GM23248 (cell line): ENCODE measurements at regions of chr1 and their contacts with region 1.

Region 1: DNA sequence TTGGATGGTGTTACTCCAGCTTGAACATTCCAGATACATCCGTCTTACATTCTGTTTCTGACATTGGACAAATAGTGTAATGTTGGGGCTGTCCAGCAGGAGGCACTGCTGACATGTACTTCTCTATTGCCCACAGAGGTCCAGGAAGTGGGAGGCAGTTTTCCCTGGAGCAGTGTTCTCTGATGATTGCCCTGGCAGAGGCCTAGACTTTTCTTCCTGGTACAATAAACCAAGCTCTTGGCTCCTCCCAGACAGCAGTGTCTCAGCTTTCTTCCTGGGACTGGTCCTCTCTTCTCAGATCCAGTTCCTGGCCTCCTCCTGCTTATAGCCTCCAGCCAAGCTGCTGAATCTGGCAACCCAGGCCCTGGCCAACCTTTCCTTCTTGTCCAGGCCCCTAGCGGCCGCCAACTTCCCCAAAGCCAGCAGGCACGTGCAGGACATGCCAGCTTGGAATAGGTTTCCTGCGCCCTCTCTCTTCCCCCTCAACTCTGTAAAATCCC is 14.9 kb upstream of the IFNLR1 start:
- DNase-seq: peak; percentile 92
- H3K4me3 ChIP-seq: no peak overlapping the region
- H3K27ac ChIP-seq: 0 out of 2 replicates have a peak overlapping the region, but pooled peaks have one; percentile 3
- H3K4me1 ChIP-seq: no peaks in the 10 kb centered on the region
- H3K27me3 ChIP-seq: no peaks in the 10 kb centered on the region

Region 2: DNA sequence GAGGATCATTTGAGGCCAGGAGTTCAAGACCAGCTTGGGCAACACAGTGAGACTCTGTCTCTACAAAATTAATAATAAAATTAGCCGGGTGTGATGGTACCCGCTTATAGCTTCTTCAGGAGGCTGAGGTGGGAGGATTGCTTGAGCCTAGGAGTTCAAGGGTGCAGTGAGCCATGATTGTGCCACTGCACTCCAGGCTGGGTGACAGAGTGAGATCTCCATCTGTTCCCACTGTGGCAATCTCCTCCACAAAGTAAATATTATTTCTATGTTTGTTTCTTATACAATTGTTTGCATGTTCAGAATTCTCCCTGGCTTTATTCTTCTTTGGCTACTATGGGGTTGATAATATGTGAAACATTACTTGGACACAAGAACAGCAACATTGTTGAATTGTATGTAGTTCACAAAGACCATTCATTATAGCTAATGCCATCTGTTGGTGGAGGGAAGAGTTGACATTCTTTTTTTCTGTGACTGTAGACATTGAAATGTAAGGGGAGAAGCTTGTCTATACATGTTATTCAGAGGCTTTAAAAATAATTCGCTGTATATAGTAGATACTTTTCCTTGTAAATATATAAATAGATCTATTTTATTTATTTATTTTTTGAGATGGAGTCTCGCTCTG is 174.0 kb before region 1 on chr1:
- in situ Hi-C with region 1: no loop called
- DNase-seq: peak; percentile 73
- H3K4me3 ChIP-seq: no peak overlapping the region
- H3K27ac ChIP-seq: no peak overlapping the region
- H3K4me1 ChIP-seq: peaks cover 6% of the 10 kb centered on the region
- H3K27me3 ChIP-seq: no peaks in the 10 kb centered on the region

Region 3: DNA sequence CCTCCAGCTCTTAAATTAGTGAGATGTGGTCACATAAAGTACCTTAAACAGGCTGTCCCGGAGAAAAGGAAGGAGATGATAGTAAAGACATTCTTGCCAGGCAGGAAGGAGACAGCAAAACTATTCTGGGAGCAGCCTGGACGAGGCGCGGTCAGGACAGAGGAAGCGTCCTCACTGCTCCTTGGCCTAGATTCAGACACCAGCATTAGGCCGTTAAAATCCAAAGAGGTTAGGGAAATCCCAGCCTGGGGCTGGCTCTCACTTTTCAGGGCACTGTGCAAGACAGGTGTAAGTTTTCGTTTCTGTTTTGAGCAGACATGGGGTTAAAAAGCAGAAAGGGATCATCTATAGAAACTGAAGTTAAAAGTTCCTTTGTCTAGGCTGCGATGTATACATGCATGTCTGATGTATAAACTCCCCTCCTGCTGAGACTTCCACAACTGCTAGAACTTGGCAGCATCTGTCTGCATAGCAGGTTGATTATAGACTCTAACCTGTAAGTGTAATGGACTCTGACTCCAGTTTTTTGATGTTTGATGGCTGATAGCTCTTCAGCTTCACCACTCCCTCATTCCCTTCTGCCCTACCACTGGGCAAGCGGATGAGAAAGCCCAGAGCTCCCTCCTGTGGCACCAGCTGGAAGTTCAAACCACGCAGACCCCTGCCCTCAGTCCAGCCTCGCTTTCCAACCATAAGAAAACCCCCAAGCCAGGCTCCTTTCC is 190.1 kb after region 1 on chr1:
- in situ Hi-C with region 1: loop called (anchors 5 kb)
- DNase-seq: peak; percentile 74
- H3K4me3 ChIP-seq: peak overlapping the region; percentile 58
- H3K27ac ChIP-seq: peak overlapping the region; percentile 54
- H3K4me1 ChIP-seq: peaks cover 39% of the 10 kb centered on the region
- H3K27me3 ChIP-seq: no peaks in the 10 kb centered on the region

Region 4: GRCh38 chr1:24635195-24635843 is 433.3 kb after region 1 on chr1:
- in situ Hi-C with region 1: loop called (anchors 10 kb)
- DNase-seq: peak; percentile 85
- H3K4me3 ChIP-seq: no peak overlapping the region
- H3K27ac ChIP-seq: no peak overlapping the region
- H3K4me1 ChIP-seq: no peaks in the 10 kb centered on the region
- H3K27me3 ChIP-seq: no peaks in the 10 kb centered on the region